Activated CD4-positive, alpha-beta T cell treated with anti-CD3 and anti-CD28 coated beads, Interleukin-2, amount 10 ng/mL, durations not matched to agents 24 days and 14 days (primary cell): ENCODE measurements at regions of chr12 and their contacts with region 1.

Region 1: DNA sequence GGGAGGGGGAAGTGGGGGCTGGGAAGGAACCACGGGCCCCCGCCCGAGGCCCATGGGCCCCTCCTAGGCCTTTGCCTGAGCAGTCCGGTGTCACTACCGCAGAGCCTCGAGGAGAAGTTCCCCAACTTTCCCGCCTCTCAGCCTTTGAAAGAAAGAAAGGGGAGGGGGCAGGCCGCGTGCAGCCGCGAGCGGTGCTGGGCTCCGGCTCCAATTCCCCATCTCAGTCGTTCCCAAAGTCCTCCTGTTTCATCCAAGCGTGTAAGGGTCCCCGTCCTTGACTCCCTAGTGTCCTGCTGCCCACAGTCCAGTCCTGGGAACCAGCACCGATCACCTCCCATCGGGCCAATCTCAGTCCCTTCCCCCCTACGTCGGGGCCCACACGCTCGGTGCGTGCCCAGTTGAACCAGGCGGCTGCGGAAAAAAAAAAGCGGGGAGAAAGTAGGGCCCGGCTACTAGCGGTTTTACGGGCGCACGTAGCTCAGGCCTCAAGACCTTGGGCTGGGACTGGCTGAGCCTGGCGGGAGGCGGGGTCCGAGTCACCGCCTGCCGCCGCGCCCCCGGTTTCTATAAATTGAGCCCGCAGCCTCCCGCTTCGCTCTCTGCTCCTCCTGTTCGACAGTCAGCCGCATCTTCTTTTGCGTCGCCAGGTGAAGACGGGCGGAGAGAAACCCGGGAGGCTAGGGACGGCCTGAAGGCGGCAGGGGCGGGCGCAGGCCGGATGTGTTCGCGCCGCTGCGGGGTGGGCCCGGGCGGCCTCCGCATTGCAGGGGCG is at the start of gene GAPDH:
- DNase-seq: peak; percentile 97
- H3K4me3 Mint-ChIP-seq: peak within 1 kb of the TSS; percentile 92
- H3K27ac Mint-ChIP-seq: peak within 1 kb of the TSS; percentile 99
- H3K4me1 Mint-ChIP-seq: peaks cover 41% of the 10 kb centered on the region
- H3K27me3 Mint-ChIP-seq: no peaks in the 10 kb centered on the region
- total RNA-seq, gene GAPDH: 4,585 and 4,599 TPM in 2 replicates

Region 2: GRCh38 chr12:6335451-6336078 is 198.5 kb before region 1 on chr12:
- intact Hi-C with region 1: loop called (anchors 1 kb)
- DNase-seq: peak; percentile 94
- H3K4me3 Mint-ChIP-seq: no peak overlapping the region
- H3K27ac Mint-ChIP-seq: no peak overlapping the region
- H3K4me1 Mint-ChIP-seq: peaks cover 41% of the 10 kb centered on the region
- H3K27me3 Mint-ChIP-seq: no peaks in the 10 kb centered on the region

Region 3: GRCh38 chr12:6493497-6494257 is 40.4 kb before region 1 on chr12 and contains the start of gene NCAPD2:
- intact Hi-C with region 1: loop called (anchors 1 kb)
- DNase-seq: peak; percentile 99
- H3K4me3 Mint-ChIP-seq: peak within 1 kb of the TSS; percentile 95
- H3K27ac Mint-ChIP-seq: peak within 1 kb of the TSS; percentile 98
- H3K4me1 Mint-ChIP-seq: peaks cover 34% of the 10 kb centered on the region
- H3K27me3 Mint-ChIP-seq: no peaks in the 10 kb centered on the region
- total RNA-seq, gene NCAPD2: 104 and 106 TPM in 2 replicates

Region 4: GRCh38 chr12:6569312-6569711 is 35.2 kb after region 1 on chr12:
- intact Hi-C with region 1: loop called (anchors 2 kb)
- DNase-seq: no peak
- H3K4me3 Mint-ChIP-seq: peak overlapping the region; percentile 98
- H3K27ac Mint-ChIP-seq: no peak overlapping the region
- H3K4me1 Mint-ChIP-seq: peaks cover 28% of the 10 kb centered on the region
- H3K27me3 Mint-ChIP-seq: no peaks in the 10 kb centered on the region

Region 5: DNA sequence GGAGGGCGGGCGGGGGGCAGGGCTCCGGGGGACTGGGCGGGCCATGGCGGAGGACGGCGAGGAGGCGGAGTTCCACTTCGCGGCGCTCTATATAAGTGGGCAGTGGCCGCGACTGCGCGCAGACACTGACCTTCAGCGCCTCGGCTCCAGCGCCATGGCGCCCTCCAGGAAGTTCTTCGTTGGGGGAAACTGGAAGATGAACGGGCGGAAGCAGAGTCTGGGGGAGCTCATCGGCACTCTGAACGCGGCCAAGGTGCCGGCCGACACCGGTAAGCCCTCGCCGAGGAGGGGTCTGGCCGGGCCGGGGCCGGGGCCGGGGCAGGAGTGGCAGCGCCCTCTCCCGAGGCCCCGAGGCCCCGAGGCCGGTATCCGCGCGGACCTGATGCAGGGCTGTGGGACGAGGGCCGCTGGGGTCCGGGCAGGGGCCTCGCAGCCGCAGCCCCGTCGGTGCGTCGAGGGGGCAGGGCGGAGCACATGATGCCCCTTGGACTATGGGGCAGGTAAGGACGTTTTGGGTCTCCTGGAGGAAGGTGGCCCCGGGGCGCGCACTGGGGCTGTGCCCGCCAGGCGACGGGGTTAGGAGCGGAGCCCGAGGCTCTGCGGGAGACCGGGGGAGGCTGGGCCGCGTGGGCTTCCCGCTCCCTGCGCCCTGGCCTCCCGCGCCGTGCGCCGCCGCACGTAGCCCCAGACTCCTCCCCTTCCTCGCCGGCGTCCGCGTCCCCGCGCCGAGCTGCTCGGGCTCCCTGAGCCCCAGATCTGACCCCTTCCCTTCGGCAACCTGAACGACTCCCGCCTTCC is 333.5 kb after region 1 on chr12 and contains the start of gene TPI1:
- intact Hi-C with region 1: loop called (anchors 1 kb)
- DNase-seq: peak; percentile 94
- H3K4me3 Mint-ChIP-seq: peak within 1 kb of the TSS; percentile 89
- H3K27ac Mint-ChIP-seq: peak within 1 kb of the TSS; percentile 99
- H3K4me1 Mint-ChIP-seq: peaks cover 50% of the 10 kb centered on the region
- H3K27me3 Mint-ChIP-seq: no peaks in the 10 kb centered on the region
- total RNA-seq, gene TPI1: 1,614 and 1,630 TPM in 2 replicates